Mucosa of descending colon (tissue), 3 donors: ENCODE measurements at regions of chr10 and their contacts with region 1.

Region 1: DNA sequence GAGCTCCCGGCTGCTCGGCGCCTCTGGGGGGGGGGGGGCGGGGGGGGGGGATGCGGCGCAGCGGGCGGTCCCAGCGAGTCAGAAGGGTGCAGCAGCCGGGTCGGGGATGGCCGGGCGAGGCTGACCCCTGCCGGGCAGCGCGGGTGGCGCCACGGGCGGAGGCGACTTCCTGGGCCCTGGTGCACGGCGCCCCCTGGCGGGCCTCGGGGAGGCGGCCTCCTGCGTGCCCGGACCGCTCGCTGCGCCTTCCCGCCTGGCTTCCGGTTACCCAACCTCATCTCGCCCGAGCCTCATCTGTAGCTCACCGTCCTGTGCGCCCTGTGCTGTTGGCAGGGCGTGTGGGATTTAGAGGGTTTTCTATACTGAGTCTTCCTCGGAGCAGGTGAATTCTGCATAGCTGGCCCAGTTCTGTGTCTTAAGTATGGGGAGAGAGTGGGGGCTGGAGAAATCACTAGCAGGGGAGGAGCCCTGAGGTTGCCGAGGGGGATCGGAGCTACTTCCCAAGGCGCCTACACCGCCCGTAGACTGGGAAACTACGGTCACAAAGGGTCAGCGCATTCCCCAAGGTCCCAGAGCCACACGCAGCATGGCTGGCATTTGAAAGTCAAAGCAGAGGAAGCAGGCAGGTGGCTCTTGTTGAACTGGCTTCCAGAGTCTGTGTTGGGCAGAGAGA is 28.3 kb upstream of the WDFY4 start:
- DNase-seq: peak; percentile 92 to 94 (median 93)
- ATAC-seq: peak; percentile 97
- H3K4me3 ChIP-seq: no peak overlapping the region
- H3K4me1 ChIP-seq: peaks cover 14% of the 10 kb centered on the region
- CTCF ChIP-seq: peak; percentile 96

Region 2: GRCh38 chr10:48551861-48552591 is 104.4 kb before region 1 on chr10:
- intact Hi-C with region 1: loop called in 1 of 2 experiments (anchors 10 kb)
- DNase-seq: peak in 1 of 3 donors; percentile 44
- ATAC-seq: peak; percentile 48
- H3K4me3 ChIP-seq: no peak overlapping the region
- H3K4me1 ChIP-seq: no peaks in the 10 kb centered on the region
- CTCF ChIP-seq: no peak

Region 3: GRCh38 chr10:48759113-48759901 is 102.9 kb after region 1 on chr10:
- intact Hi-C with region 1: no loop called
- DNase-seq: no peak
- ATAC-seq: no peak
- H3K4me3 ChIP-seq: no peak overlapping the region
- H3K4me1 ChIP-seq: no peaks in the 10 kb centered on the region
- CTCF ChIP-seq: no peak

Region 4: DNA sequence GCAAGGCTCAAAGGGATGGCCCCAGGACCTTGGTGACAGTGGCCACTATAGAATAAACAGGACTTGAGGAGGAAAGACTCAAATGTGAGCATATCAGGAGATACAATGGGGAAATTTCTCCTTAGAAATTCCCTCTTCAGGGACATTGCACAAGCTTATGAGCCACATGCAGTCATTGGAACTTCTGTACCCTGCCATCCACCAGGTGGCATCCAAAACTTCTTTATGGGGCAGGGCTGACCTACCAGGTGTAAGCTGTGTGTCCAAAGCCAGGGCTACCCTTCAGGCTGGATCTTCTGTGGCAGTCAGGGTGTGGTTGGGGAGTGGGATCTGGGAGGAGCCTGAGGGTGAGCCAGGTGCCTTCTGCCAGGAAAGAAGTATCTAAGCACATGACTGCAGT is 319.8 kb after region 1 on chr10:
- intact Hi-C with region 1: loop called in 1 of 2 experiments (anchors 10 kb)
- DNase-seq: peak in 1 of 3 donors; percentile 9
- ATAC-seq: peak; percentile 23
- H3K4me3 ChIP-seq: no peak overlapping the region
- H3K4me1 ChIP-seq: no peaks in the 10 kb centered on the region
- CTCF ChIP-seq: no peak